ENCODE measurements at regions of chr13 and their contacts with region 1.

Region 1: DNA sequence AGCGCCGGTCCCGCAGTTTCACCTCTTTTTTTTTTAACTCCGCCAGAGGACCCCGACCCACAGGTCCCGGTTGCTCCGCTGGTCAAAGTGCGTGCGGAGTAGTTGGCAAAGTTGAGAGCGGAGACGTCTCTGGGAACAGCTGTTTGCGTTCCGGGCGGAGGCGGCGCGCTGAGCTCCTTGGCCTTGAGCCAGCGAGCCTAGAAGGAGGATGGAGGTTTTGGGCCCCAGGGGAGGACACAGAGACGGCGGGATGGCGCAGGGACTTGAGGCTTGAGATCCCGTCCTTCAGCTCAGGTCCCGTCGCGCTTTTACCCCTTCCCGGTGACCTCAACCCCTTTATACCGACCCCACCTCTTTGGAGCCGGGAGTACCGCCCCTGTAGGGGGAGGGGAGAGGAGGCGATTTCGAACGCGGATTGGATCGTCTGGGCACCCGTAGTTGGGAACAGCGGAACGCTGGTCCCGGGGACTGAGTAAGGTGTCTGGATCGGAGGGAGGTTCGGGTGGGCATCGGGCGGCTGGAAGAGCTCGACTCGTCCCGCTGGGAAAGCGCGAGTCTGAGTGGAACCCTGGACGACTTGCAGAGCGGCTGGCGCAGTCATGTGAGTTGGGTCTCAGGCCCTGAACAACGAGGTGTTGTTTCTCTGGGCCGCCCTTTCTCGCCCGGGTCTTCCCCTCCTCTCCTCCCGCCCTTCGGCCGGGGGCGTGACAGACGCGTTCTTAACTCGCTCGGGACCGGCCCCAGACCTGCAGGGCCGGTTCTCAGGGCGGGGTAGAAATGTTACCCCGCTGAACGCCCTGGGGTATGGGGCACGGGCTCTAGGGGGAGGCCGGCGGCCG is at the start of gene WBP4:
- DNase-seq: peak; percentile 89 to 94 (median 90)
- H3K4me3 ChIP-seq: peak within 1 kb of the TSS; percentile 92 to 99
- H3K4me3 Mint-ChIP-seq: peak within 1 kb of the TSS; percentile 97 to 100 (median 100)
- H3K27ac ChIP-seq: peak within 1 kb of the TSS; percentile 81
- H3K27ac Mint-ChIP-seq: peak within 1 kb of the TSS; percentile 99 to 100 (median 99)
- H3K4me1 ChIP-seq: peaks cover 42% of the 10 kb centered on the region
- H3K4me1 Mint-ChIP-seq: peaks cover 28 to 74% (median 38%) of the 10 kb centered on the region in 4 donors
- H3K27me3 ChIP-seq: no peaks in the 10 kb centered on the region
- H3K27me3 Mint-ChIP-seq: peaks cover 2 to 5% of the 10 kb centered on the region in 2 donors
- total RNA-seq, gene WBP4: 8.4 to 9.1 TPM

Region 2: GRCh38 chr13:40974460-40975407 is 86.6 kb before region 1 on chr13:
- CTCF ChIA-PET with region 1: interaction called, 30 read pairs
- POLR2A ChIA-PET with region 1: interaction called, 48 read pairs
- intact Hi-C with region 1: no loop called
- DNase-seq: peak; percentile 54 to 75 (median 61)
- H3K4me3 ChIP-seq: no peak overlapping the region
- H3K4me3 Mint-ChIP-seq: peak overlapping the region; percentile 43 to 97 (median 78)
- H3K27ac ChIP-seq: peak overlapping the region; percentile 19
- H3K27ac Mint-ChIP-seq: peak overlapping the region; percentile 84 to 98 (median 86)
- H3K4me1 ChIP-seq: peaks cover 85% of the 10 kb centered on the region
- H3K4me1 Mint-ChIP-seq: peaks cover 68 to 94% (median 80%) of the 10 kb centered on the region in 4 donors
- H3K27me3 ChIP-seq: no peaks in the 10 kb centered on the region
- H3K27me3 Mint-ChIP-seq: no peaks in the 10 kb centered on the region

Region 3: DNA sequence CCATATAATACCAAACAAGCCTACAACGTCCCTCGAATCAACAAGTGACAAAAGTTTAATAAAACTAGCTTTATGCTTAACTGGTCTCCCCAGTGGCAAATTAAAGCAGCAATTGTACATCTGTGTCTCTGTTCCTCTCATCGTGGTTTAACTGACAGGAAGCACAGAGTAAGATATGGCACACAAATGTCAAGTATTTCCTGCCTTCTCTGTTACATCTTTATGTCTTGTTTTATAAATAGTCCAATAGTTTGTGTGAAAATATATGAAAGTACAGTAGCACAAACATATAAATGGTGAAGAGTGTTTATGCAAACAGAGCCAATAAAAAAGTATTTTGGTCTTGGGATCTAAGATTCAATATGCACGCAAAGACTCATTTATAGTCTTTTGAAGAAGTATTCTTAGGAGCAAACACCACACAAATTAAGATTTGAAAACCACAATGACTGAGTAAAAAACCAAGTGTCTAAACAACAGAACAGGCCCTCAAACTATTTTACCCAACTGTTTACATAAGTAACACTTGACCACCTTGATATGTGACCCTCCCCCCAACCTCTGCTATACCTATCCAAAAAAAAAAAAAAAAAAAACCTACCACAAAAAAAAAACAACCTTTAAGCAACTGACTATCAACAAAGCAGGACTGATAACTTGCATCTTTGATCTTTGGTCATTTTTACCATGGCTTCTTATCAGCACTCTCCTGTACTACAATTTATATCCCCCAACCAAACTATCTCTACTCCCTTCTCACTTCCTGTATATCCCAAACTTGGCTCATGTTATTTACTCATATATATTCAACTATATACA is 56.2 kb before region 1 on chr13:
- CTCF ChIA-PET with region 1: interaction called, 3 read pairs
- POLR2A ChIA-PET with region 1: interaction called, 14 read pairs
- intact Hi-C with region 1: no loop called
- DNase-seq: peak; percentile 52 to 72 (median 64)
- H3K4me3 ChIP-seq: peak overlapping the region in 1 of 2 donors; percentile 7
- H3K4me3 Mint-ChIP-seq: peak overlapping the region; percentile 38 to 87 (median 62)
- H3K27ac ChIP-seq: peak overlapping the region; percentile 59
- H3K27ac Mint-ChIP-seq: peak overlapping the region; percentile 73 to 94 (median 90)
- H3K4me1 ChIP-seq: peaks cover 93% of the 10 kb centered on the region
- H3K4me1 Mint-ChIP-seq: peaks cover 49 to 79% (median 60%) of the 10 kb centered on the region in 4 donors
- H3K27me3 ChIP-seq: no peaks in the 10 kb centered on the region
- H3K27me3 Mint-ChIP-seq: no peaks in the 10 kb centered on the region

Region 4: DNA sequence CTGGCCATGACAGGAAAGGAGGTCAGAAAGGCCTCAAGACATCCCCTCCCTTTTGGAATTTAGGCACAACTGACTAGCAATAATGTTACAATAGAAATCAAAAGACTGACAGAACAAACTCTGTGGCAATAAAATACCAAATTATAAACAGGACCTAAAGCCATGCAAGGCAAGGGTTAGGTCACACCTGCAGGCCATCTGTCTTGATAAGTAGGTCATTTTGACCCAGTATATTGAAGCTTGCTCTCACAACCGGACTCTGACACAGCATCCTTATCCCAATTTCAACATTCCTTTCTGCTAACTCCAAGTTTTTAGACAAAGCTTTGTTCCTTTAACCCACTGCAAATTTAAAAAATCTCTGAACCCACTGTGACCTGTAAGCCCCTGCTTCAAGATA is 40.6 kb after region 1 on chr13:
- CTCF ChIA-PET with region 1: no interaction called
- POLR2A ChIA-PET with region 1: no interaction called
- intact Hi-C with region 1: no loop called
- DNase-seq: no peak
- H3K4me3 ChIP-seq: no peak overlapping the region
- H3K4me3 Mint-ChIP-seq: no peak overlapping the region
- H3K27ac ChIP-seq: no peak overlapping the region
- H3K27ac Mint-ChIP-seq: no peak overlapping the region
- H3K4me1 ChIP-seq: no peaks in the 10 kb centered on the region
- H3K4me1 Mint-ChIP-seq: no peaks in the 10 kb centered on the region
- H3K27me3 ChIP-seq: no peaks in the 10 kb centered on the region
- H3K27me3 Mint-ChIP-seq: peaks cover 2 to 5% of the 10 kb centered on the region in 2 donors

Region 5: GRCh38 chr13:41132512-41133152 is 71.3 kb after region 1 on chr13 and contains the start of gene KBTBD6:
- CTCF ChIA-PET with region 1: interaction called, 3 read pairs
- POLR2A ChIA-PET with region 1: interaction called, 11 read pairs
- intact Hi-C with region 1: loop called (anchors 1 kb)
- DNase-seq: peak; percentile 89 to 95 (median 90)
- H3K4me3 ChIP-seq: peak within 1 kb of the TSS; percentile 56
- H3K4me3 Mint-ChIP-seq: peak within 1 kb of the TSS; percentile 95 to 100 (median 99)
- H3K27ac ChIP-seq: peak within 1 kb of the TSS; percentile 63
- H3K27ac Mint-ChIP-seq: peak within 1 kb of the TSS; percentile 91 to 98 (median 98)
- H3K4me1 ChIP-seq: peaks cover 49% of the 10 kb centered on the region
- H3K4me1 Mint-ChIP-seq: peaks cover 39 to 55% (median 46%) of the 10 kb centered on the region in 4 donors
- H3K27me3 ChIP-seq: no peaks in the 10 kb centered on the region
- H3K27me3 Mint-ChIP-seq: no peaks in the 10 kb centered on the region
- total RNA-seq, gene KBTBD6: 9.9 to 10.5 TPM

Region 6: DNA sequence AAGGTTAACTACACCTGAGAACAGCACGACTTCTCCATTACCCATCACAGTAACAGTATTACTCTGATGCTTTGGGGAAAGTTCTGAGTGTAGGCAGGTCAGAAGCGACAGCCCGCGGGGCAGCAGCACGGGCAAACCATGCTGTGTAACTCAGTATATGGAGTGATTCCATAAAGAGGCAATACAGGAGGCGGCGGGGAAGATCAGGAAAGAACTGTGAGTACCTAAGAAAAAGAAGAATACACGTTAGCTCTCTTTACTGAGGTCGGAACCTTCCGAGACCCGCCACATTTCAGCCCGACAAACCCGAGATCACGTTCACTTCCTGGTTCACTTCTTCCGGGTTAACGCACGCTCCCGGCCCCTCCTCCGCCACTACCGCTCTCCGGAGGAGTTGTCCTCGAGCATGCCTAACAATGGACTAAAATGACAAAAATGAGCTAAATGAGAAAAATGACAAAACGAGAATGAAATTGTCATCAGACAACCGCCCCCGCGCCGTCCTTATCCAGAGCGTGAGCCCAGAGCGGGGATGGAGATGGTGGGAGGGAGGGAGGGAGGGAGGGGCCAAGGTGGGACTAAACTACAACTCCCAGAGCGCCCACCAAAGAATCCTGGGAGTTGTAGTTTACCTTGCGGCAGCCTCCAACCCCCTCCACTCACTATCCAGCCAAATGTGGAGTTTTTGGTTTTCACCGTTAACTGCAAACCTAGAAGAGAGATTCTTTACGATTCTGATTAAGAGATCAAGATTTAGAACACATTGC is 202.2 kb after region 1 on chr13 and contains the start of gene MTRF1:
- CTCF ChIA-PET with region 1: no interaction called
- POLR2A ChIA-PET with region 1: interaction called, 5 read pairs
- intact Hi-C with region 1: loop called (anchors 1 kb)
- DNase-seq: peak; percentile 86 to 89 (median 87)
- H3K4me3 ChIP-seq: peak within 1 kb of the TSS; percentile 80 to 82
- H3K4me3 Mint-ChIP-seq: peak within 1 kb of the TSS; percentile 94 to 99 (median 98)
- H3K27ac ChIP-seq: peak within 1 kb of the TSS; percentile 67
- H3K27ac Mint-ChIP-seq: peak within 1 kb of the TSS; percentile 88 to 99 (median 98)
- H3K4me1 ChIP-seq: peaks cover 19% of the 10 kb centered on the region
- H3K4me1 Mint-ChIP-seq: peaks cover 13 to 18% (median 15%) of the 10 kb centered on the region in 4 donors
- H3K27me3 ChIP-seq: no peaks in the 10 kb centered on the region
- H3K27me3 Mint-ChIP-seq: no peaks in the 10 kb centered on the region
- total RNA-seq, gene MTRF1: 29.5 to 30.1 TPM

Region 7: DNA sequence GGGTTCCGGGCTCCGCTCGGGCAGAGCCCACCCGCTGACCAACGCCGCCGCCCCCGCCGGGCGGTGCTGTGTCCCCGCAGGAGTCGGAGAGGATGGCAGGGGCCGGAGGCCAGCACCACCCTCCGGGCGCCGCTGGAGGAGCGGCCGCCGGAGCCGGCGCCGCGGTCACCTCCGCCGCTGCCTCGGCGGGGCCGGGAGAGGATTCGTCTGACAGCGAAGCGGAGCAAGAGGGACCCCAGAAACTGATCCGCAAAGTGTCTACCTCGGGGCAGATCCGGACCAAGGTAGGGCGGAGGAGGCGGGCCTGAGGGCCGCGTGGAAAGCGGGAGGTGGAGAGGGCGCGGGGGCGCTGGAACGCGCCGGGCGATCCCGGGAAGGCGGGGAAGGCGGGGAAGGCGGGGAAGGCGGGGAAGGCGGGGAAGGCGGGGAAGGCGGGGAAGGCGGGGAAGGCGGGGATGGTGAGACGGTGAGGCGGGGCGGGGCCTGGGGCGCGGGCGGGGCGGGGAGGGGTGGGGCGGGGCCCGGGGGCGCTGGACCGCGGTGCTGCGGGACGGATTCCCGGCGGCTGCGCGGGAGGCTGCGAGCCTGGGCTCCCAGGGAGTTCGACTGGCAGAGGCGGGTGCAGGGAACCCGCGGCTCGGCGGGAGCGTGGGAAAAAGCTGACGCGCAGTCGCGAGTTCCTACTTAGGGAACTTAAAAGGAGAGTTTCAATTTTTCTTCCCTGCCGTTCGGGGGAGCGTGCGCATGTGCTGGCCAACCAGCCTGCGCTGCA is 987.6 kb after region 1 on chr13:
- CTCF ChIA-PET with region 1: no interaction called
- POLR2A ChIA-PET with region 1: no interaction called
- intact Hi-C with region 1: loop called (anchors 5 kb)
- DNase-seq: peak; percentile 51 to 71 (median 57)
- H3K4me3 ChIP-seq: peak overlapping the region; percentile 45 to 76
- H3K4me3 Mint-ChIP-seq: peak overlapping the region; percentile 82 to 93 (median 89)
- H3K27ac ChIP-seq: peak overlapping the region; percentile 53
- H3K27ac Mint-ChIP-seq: peak overlapping the region in 4 of 7 donors; percentile 61 to 88 (median 74)
- H3K4me1 ChIP-seq: peaks cover 12% of the 10 kb centered on the region
- H3K4me1 Mint-ChIP-seq: peaks cover 17 to 25% (median 19%) of the 10 kb centered on the region in 4 donors
- H3K27me3 ChIP-seq: no peaks in the 10 kb centered on the region
- H3K27me3 Mint-ChIP-seq: no peaks in the 10 kb centered on the region

Region 8: GRCh38 chr13:42969558-42970172 is 1908.4 kb after region 1 on chr13:
- CTCF ChIA-PET with region 1: no interaction called
- POLR2A ChIA-PET with region 1: no interaction called
- intact Hi-C with region 1: no loop called
- DNase-seq: peak; percentile 73 to 77 (median 75)
- H3K4me3 ChIP-seq: no peak overlapping the region
- H3K4me3 Mint-ChIP-seq: peak overlapping the region in 1 of 8 donors; percentile 34
- H3K27ac ChIP-seq: no peak overlapping the region
- H3K27ac Mint-ChIP-seq: peak overlapping the region in 5 of 7 donors; percentile 0 to 77 (median 16)
- H3K4me1 ChIP-seq: peaks cover 26% of the 10 kb centered on the region
- H3K4me1 Mint-ChIP-seq: peaks cover 15 to 28% (median 21%) of the 10 kb centered on the region in 4 donors
- H3K27me3 ChIP-seq: no peaks in the 10 kb centered on the region
- H3K27me3 Mint-ChIP-seq: no peaks in the 10 kb centered on the region

Measured in CD4-positive, alpha-beta memory T cell (primary cell).